ENCODE measurements at regions of chr19 and their contacts with region 1.

Region 1: GRCh38 chr19:4065430-4066175 is 1.1 kb downstream of the ZBTB7A start:
- DNase-seq: peak; percentile 99
- ATAC-seq: peak; percentile 84
- H3K4me3 Mint-ChIP-seq: peak overlapping the region; percentile 71
- H3K27ac Mint-ChIP-seq: no peak overlapping the region
- H3K4me1 Mint-ChIP-seq: peaks cover 40% of the 10 kb centered on the region
- H3K27me3 Mint-ChIP-seq: no peaks in the 10 kb centered on the region

Region 2: DNA sequence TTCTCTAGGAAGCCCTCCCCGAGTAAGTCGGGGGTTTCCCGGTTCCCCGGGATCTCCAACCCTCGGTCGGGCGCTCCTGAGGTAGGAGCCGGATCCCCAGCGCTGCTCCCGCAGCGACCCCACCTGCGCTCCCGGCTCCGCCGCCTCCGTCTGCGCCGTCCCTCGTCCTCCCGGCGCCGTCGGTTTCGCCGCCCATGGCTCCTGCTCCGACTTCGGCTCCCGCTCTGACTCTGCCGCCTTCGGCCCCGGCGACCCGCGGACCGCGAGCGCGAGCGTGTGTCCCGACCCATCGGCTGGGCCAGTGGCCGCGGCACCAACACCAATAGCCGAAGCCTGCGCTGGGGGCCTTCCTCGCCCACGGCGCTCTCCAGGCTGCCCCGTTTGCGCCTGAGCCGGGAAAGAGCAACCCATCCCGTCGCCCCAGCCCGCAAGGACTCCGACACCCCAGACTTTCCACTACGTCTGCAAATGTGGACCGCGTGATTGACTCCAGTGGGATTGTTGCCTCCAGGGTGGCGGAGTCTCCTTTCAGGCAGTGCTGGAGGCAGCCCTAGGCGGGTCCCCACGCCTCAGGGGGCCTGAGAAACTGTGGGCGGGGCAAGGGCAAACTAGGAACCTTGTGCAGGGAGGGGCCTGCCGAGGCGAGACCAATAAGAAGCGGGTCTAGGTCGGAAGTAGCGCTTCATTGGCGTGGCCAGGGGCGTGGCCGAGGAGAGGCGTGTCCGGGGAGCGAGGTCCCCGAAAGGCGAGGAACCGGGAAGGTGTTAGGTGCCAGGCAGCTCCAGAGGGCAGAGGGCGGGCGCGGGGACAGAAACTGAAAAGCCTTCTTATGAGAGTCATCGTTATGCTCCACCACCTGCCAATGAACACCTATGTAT is 438.9 kb before region 1 on chr19 and contains the start of gene CACTIN:
- CTCF ChIA-PET with region 1: no interaction called
- POLR2A ChIA-PET with region 1: no interaction called
- intact Hi-C with region 1: loop called in 1 of 2 experiments (anchors 5 kb)
- DNase-seq: peak; percentile 99
- ATAC-seq: peak; percentile 98
- H3K4me3 Mint-ChIP-seq: peak within 1 kb of the TSS; percentile 91
- H3K27ac Mint-ChIP-seq: peak within 1 kb of the TSS; percentile 82
- H3K4me1 Mint-ChIP-seq: peaks cover 22% of the 10 kb centered on the region
- H3K27me3 Mint-ChIP-seq: no peaks in the 10 kb centered on the region
- total RNA-seq, gene CACTIN: 28.0 to 33.6 TPM

Region 3: GRCh38 chr19:4077882-4078614 is 12.4 kb after region 1 on chr19:
- CTCF ChIA-PET with region 1: no interaction called
- POLR2A ChIA-PET with region 1: interaction called, 4 read pairs
- intact Hi-C with region 1: loop called in 1 of 2 experiments (anchors 1 kb)
- DNase-seq: peak; percentile 80
- ATAC-seq: peak; percentile 59
- H3K4me3 Mint-ChIP-seq: peak overlapping the region; percentile 54
- H3K27ac Mint-ChIP-seq: peak overlapping the region; percentile 75
- H3K4me1 Mint-ChIP-seq: peaks cover 33% of the 10 kb centered on the region
- H3K27me3 Mint-ChIP-seq: no peaks in the 10 kb centered on the region

Region 4: DNA sequence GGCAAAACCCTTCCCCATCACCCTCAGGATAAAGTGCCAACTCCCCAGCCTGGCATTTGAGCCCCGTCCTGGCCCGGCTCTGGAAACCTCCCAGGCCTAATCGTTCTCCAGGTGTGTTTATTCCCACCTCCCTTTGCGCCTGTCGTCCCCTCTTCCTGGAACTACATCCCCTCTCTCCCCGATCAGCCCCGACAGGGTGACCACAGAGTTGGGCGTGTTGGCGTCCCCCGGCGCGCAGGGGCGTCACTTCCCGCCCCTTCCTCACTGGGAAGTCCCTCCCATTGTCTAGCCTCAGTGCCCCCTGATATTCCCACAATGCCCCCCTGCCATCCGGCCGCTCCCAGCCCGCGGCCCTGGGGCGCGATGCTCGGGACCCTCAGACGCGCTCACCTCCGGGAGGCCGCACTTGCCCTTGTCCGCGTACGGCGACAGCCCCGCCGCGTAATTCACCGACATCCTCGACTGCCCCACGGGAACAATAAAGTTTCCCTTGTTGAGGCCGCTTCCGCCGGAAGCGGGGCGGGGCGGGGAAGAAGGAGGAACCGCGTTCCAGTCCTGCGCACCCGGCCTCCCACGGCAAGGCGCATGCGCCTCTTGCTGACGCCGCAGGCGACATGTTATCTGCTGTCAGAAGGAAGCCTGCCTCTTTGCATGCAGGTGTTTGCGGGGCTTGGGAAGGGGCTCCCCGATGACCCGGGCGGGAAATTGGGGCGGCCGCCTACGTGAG is 116.6 kb after region 1 on chr19 and contains the starts of genes ANKRD24 and SIRT6:
- CTCF ChIA-PET with region 1: no interaction called
- POLR2A ChIA-PET with region 1: no interaction called
- intact Hi-C with region 1: loop called in 1 of 2 experiments (anchors 1 kb)
- DNase-seq: peak; percentile 98
- ATAC-seq: peak; percentile 84
- H3K4me3 Mint-ChIP-seq: peak within 1 kb of the TSS; percentile 92
- H3K27ac Mint-ChIP-seq: peak within 1 kb of the TSS; percentile 93
- H3K4me1 Mint-ChIP-seq: peaks cover 30% of the 10 kb centered on the region
- H3K27me3 Mint-ChIP-seq: no peaks in the 10 kb centered on the region
- total RNA-seq, gene ANKRD24: 1.1 to 1.3 TPM
- total RNA-seq, gene SIRT6: 26.2 to 29.4 TPM

Region 5: GRCh38 chr19:4471403-4472173 is 406.0 kb after region 1 on chr19:
- CTCF ChIA-PET with region 1: no interaction called
- POLR2A ChIA-PET with region 1: no interaction called
- intact Hi-C with region 1: loop called in 1 of 2 experiments (anchors 1 kb)
- DNase-seq: peak; percentile 98
- ATAC-seq: peak; percentile 90
- H3K4me3 Mint-ChIP-seq: no peak overlapping the region
- H3K27ac Mint-ChIP-seq: no peak overlapping the region
- H3K4me1 Mint-ChIP-seq: peaks cover 21% of the 10 kb centered on the region
- H3K27me3 Mint-ChIP-seq: no peaks in the 10 kb centered on the region

Region 6: GRCh38 chr19:4781801-4782200 is 716.2 kb after region 1 on chr19:
- CTCF ChIA-PET with region 1: no interaction called
- POLR2A ChIA-PET with region 1: no interaction called
- intact Hi-C with region 1: no loop called
- DNase-seq: no peak
- ATAC-seq: no peak
- H3K4me3 Mint-ChIP-seq: no peak overlapping the region
- H3K27ac Mint-ChIP-seq: no peak overlapping the region
- H3K4me1 Mint-ChIP-seq: no peaks in the 10 kb centered on the region
- H3K27me3 Mint-ChIP-seq: peaks cover 13% of the 10 kb centered on the region

Region 7: DNA sequence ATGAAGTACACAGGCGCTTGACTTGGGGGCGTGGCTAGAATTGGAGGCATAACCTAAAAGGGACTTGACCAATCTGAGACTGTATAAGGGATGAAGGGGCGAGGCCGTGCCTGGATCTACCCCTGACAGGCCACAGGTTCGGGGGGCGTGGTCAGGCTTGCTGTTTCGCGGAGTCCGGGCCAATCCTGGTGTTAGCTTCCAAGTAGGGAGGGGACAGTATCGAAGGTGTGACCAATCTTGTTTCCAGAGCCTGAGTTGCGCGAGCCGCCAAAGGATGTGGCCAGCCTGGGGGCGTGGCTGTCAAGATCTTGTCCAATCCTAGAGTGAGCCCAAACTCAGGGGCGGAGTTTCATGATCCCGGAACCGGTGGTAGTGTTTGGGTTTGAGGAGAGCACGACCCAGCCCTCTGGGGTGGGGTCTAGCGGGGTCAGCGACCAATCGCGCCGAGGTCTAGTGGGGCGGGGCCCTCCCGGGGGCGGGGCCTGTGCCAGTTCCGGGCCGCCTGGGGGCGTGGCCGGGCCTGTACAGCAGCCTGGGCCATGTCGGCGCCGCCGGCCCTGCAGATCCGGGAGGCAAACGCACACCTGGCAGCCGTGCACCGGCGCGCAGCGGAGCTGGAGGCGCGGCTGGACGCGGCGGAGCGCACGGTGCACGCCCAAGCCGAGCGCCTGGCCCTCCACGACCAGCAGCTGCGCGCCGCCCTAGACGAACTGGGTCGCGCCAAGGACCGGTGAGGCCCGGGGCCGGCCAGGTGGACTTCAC is 1838.9 kb after region 1 on chr19 and contains the start of gene VMAC:
- CTCF ChIA-PET with region 1: no interaction called
- POLR2A ChIA-PET with region 1: no interaction called
- intact Hi-C with region 1: loop called in 1 of 2 experiments (anchors 5 kb)
- DNase-seq: peak; percentile 100
- ATAC-seq: peak; percentile 87
- H3K4me3 Mint-ChIP-seq: peak within 1 kb of the TSS; percentile 94
- H3K27ac Mint-ChIP-seq: peak within 1 kb of the TSS; percentile 98
- H3K4me1 Mint-ChIP-seq: peaks cover 32% of the 10 kb centered on the region
- H3K27me3 Mint-ChIP-seq: no peaks in the 10 kb centered on the region
- total RNA-seq, gene VMAC: 2.3 to 2.8 TPM

Measured in activated CD4-positive, alpha-beta T cell treated with anti-CD3 and anti-CD28 coated beads for 36 hours (primary cell).